Activated CD8-positive, alpha-beta T cell treated with anti-CD3 and anti-CD28 coated beads, Interleukin-2, amount 10 ng/mL, durations not matched to agents 7 days and 5 days (primary cell): ENCODE measurements at regions of chr19 and their contacts with region 1.

Region 1: DNA sequence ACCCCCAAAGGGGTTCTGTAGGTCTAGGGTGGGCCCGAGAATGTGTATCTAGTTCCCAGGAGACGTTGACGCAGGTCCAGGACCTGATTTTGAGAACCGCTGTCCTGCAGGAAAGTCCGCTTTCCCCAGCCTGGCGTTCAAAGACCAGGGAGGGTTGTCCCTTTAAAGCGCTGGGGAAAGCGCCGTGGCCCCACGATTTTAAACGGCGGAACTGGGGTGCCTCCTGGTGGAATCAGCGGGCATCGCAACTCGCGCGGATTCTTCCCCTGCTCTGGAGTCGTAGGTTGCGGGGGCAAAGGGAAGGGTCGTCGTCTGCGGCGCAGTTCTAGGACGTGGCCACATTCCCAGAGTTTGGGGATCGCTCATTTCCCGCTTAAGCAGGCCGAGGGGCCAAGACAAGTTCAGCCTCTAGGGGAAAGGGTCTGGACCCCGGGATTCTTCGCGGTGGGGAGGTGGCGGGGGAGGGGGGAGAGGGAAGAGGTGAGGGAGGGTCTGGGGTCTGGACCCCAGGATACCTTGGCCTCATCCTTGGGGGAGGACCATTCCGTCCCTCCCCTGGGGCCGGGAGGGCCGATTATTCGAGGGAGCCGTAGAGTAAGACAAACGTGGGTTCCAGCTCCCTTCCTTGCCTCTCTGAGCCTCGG is 7.7 kb downstream of the PNMA8B start:
- DNase-seq: peak; percentile 82
- ATAC-seq: peak; percentile 78
- H3K4me3 Mint-ChIP-seq: no peak overlapping the region
- H3K27ac Mint-ChIP-seq: no peak overlapping the region
- H3K4me1 Mint-ChIP-seq: peaks cover 9% of the 10 kb centered on the region
- H3K27me3 Mint-ChIP-seq: peaks cover 55% of the 10 kb centered on the region

Region 2: DNA sequence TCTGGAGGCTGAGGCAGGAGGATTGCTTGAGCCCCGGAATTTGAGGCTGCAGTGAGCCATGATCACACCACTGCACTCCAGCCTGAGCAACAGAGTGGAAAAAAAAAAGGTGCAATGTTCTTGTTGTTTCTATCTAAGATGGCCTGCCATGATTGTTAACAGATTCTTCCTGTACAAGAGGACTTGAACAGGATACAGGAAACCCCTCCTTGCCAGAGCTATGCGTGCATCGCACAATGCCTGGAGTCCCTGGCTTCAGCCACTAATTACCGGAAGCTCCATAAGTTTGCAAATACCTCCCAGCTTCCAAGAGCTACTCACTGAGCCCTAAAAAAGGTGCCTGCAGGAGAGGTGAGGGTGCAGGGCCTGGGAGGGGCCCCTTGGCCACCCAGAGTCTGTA is 204.2 kb before region 1 on chr19:
- CTCF ChIA-PET with region 1: interaction called, 16 read pairs
- POLR2A ChIA-PET with region 1: no interaction called
- DNase-seq: no peak
- ATAC-seq: no peak
- H3K4me3 Mint-ChIP-seq: no peak overlapping the region
- H3K27ac Mint-ChIP-seq: no peak overlapping the region
- H3K4me1 Mint-ChIP-seq: no peaks in the 10 kb centered on the region
- H3K27me3 Mint-ChIP-seq: peaks cover 5% of the 10 kb centered on the region

Region 3: DNA sequence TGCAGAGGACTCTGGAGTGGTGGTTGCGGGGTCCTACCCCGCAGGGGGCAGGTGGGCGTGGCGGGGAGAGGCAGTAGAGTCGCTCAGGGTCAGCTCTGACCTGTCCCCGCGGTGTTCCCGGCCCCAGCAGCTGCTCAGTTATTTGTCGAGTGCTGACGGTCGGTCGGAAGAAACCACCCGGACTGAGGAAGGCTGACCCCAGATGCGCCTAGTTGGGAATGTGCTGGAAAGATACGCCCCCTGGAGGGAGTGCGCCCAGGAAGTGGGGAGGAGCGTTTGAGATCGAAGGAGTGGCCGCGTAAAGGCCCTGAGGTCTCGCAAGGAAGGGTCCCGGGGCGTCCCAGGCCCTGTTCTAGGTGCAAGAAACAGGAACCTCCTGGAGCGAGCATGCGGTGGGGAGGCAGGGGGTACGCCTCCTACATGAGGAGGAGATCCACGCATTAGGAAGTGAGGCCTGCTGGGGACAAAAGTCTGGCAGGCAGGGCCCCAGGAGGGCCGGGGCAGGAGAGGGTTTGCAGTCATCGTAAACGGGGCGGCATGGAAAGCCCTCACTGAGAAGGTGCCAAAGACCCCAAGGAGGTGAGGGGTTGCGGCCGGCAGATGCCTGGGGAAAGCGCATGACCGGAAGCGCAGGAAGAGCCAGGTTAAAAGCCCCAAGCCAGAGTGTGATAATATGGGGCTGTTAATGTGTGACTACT is 83.7 kb before region 1 on chr19:
- CTCF ChIA-PET with region 1: interaction called, 23 read pairs
- POLR2A ChIA-PET with region 1: interaction called, 6 read pairs
- DNase-seq: no peak
- ATAC-seq: no peak
- H3K4me3 Mint-ChIP-seq: no peak overlapping the region
- H3K27ac Mint-ChIP-seq: no peak overlapping the region
- H3K4me1 Mint-ChIP-seq: peaks cover 15% of the 10 kb centered on the region
- H3K27me3 Mint-ChIP-seq: peaks cover 54% of the 10 kb centered on the region

Region 4: GRCh38 chr19:46529622-46530462 is 41.9 kb after region 1 on chr19:
- CTCF ChIA-PET with region 1: no interaction called
- POLR2A ChIA-PET with region 1: no interaction called
- DNase-seq: peak; percentile 81
- ATAC-seq: peak; percentile 81
- H3K4me3 Mint-ChIP-seq: peak overlapping the region; percentile 25
- H3K27ac Mint-ChIP-seq: peak overlapping the region; percentile 82
- H3K4me1 Mint-ChIP-seq: peaks cover 38% of the 10 kb centered on the region
- H3K27me3 Mint-ChIP-seq: no peaks in the 10 kb centered on the region